ENCODE measurements at regions of chr4 and their contacts with region 1.

Region 1: DNA sequence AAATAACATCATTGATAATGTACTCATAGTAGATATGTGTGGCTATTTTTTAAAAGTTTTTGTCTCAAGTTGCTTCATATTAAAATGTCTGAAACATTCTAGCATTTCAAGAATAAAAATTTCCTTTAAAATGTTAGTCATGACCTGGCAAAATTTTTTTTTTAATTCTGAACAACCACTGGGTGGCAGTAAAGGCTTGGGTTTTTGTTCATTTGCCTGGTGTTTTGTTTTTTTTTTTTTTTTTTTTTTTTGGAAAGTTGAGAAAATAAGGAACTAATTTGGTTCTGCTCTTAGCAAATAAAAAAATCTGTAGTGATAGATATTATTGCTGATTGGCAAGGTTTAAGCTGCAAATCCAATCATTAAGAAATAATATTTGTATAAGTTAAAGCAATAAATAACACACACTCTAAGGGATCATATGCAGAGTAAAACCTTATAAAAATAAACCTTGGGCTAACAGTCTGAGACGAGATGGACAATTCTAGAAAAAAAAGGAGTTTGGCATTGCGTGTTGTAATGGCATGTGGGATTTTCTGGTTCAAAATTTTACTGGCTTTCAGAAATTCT is 81.4 kb downstream of the CEP44 start:
- DNase-seq: peak; percentile 42
- H3K4me3 ChIP-seq: no peak overlapping the region
- H3K27ac ChIP-seq: no peak overlapping the region
- H3K4me1 ChIP-seq: no peaks in the 10 kb centered on the region
- CTCF ChIP-seq: peak; percentile 83

Region 2: GRCh38 chr4:174314770-174315169 is 50.3 kb before region 1 on chr4:
- CTCF ChIA-PET with region 1: no interaction called
- POLR2A ChIA-PET with region 1: no interaction called
- intact Hi-C with region 1: no loop called
- DNase-seq: no peak
- H3K4me3 ChIP-seq: no peak overlapping the region
- H3K27ac ChIP-seq: no peak overlapping the region
- H3K4me1 ChIP-seq: no peaks in the 10 kb centered on the region
- CTCF ChIP-seq: no peak

Region 3: DNA sequence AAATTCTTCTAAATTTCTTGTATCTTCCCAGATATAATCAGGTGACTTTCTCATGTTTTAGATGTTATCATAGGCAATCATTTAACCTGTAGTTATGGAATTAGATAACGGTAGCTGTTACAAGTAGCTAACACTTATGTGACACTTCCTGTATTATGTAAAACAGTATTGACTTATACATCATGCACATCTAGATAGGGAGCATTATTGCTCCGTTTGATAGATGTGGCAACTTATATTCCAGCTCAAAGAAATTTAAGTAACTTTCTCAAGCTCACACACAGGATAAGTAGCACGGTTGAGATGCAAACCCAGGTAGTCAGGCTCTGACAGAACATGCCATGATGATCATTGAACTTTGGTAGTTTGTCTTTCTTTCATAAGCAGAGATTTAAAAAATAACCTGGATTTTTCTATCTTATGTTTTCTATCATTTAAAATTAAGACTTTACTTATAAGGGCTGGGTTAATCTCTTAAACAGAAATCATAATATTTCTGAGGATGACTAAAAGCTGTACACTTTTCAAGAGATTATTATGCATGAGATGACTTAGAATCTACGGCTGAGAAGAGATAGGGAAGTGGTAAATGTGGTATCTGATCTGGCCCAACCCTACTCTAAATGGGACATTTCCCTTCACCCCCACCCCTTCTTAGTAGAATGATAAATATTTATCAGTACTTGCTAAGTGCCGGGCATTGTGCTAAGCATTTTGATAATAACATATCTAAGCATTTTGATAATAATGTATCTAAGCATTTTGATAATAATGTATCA is 226.3 kb after region 1 on chr4:
- CTCF ChIA-PET with region 1: no interaction called
- POLR2A ChIA-PET with region 1: no interaction called
- intact Hi-C with region 1: no loop called
- DNase-seq: no peak
- H3K4me3 ChIP-seq: no peak overlapping the region
- H3K27ac ChIP-seq: no peak overlapping the region
- H3K4me1 ChIP-seq: no peaks in the 10 kb centered on the region
- CTCF ChIP-seq: no peak

Region 4: DNA sequence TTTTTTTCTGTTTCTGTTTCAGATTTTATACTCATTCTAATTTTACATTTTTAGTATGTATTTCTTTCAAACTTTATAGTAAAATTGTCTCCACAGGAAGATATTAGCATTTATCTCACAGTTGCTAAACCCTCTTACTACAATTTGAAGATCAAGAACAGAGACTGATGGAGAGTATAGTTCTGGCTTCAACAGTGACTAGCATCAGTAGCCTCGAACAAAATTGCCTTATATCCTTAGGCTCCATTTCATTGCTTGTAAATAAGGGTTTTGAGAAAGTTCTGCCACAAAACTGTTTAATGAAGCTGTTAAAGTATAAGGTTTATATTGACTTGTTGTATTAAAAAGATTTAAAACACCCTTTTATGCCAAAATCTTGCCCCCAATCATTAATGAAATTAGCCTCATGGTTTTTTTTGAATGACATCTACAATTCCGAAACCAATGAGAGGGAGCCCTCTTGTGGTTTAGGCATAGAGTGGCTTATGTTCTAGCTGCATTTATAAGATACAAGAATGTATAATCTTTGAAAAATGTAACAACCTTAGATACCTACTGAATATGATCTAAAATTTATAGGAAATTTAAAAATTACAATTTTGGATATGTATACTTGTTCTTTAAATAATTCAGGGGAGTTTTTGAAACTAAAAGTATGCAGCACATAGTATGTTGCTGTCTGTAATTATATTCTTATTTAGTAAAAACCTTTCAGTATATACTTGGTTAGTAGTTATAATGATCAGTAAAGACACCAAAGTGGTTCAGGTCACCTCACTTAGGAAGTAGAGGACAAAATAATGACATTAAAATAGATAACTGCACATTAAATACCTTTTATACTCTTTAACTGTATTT is 267.0 kb after region 1 on chr4:
- CTCF ChIA-PET with region 1: no interaction called
- POLR2A ChIA-PET with region 1: no interaction called
- intact Hi-C with region 1: loop called (anchors 1 kb)
- DNase-seq: peak; percentile 49
- H3K4me3 ChIP-seq: no peak overlapping the region
- H3K27ac ChIP-seq: no peak overlapping the region
- H3K4me1 ChIP-seq: no peaks in the 10 kb centered on the region
- CTCF ChIP-seq: peak; percentile 93

Region 5: GRCh38 chr4:174714393-174715211 is 349.5 kb after region 1 on chr4:
- CTCF ChIA-PET with region 1: no interaction called
- POLR2A ChIA-PET with region 1: no interaction called
- intact Hi-C with region 1: loop called (anchors 5 kb)
- DNase-seq: peak; percentile 56
- H3K4me3 ChIP-seq: no peak overlapping the region
- H3K27ac ChIP-seq: no peak overlapping the region
- H3K4me1 ChIP-seq: no peaks in the 10 kb centered on the region
- CTCF ChIP-seq: peak; percentile 95

Region 6: DNA sequence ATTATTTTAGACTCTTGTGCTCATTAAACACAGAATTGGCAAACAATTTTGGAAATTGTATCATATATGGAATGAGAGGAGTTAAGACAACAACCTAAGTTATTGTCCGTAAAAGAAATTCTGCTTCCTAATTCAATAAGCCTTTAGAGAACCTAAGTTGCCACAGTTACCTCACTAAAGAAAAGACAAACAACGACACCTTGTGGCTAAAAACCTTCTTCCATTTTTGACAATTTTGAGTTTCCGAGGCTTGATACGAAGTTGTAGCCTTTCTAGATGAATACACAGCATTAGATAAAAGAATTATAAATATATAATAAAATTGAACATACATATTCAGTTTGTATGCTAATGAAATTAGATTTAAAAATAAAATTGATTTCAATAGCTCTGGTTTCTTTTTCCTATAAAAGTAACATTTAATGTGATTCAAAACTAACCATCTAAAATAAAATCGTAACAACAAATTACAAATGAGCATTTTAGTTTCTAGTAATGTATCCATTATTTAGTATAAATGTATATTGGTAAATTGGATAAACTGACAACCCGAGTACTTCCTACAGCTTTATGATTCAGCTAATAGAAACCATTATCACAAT is 1171.8 kb after region 1 on chr4:
- CTCF ChIA-PET with region 1: no interaction called
- POLR2A ChIA-PET with region 1: no interaction called
- intact Hi-C with region 1: loop called (anchors 2 kb)
- DNase-seq: peak; percentile 82
- H3K4me3 ChIP-seq: no peak overlapping the region
- H3K27ac ChIP-seq: no peak overlapping the region
- H3K4me1 ChIP-seq: peaks cover 4% of the 10 kb centered on the region
- CTCF ChIP-seq: peak; percentile 89

Measured in OCI-LY7 (cell line).